Activated CD4-positive, alpha-beta memory T cell treated with anti-CD3 and anti-CD28 coated beads for 36 hours (primary cell): ENCODE measurements at regions of chr6 and their contacts with region 1.

Region 1: DNA sequence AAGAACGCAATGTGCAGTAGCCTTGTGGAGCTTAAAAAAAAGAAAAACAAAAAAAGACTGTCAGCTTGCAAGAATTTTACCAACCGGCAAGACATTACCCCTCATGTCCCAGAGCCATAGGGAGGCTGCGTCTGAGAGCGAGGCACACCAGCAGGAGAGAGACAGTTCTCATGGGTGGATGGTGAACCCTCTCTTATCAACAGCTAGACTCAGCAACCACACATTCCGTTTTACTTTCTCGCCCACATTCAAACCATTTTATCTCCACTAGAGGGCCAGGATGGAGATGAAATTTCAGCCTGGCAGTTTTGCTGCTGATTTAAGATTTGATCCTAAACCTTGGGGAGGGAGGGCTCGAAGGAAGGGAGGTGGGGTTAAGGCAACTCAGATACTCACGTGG is 247.0 kb downstream of the ATXN1 start:
- DNase-seq: peak; percentile 39
- H3K4me3 Mint-ChIP-seq: no peak overlapping the region
- H3K27ac Mint-ChIP-seq: no peak overlapping the region
- H3K4me1 Mint-ChIP-seq: peaks cover 79% of the 10 kb centered on the region
- H3K27me3 Mint-ChIP-seq: no peaks in the 10 kb centered on the region

Region 2: GRCh38 chr6:16425881-16426615 is 88.2 kb before region 1 on chr6:
- CTCF ChIA-PET with region 1: interaction called, 11 read pairs
- POLR2A ChIA-PET with region 1: no interaction called
- intact Hi-C with region 1: no loop called
- DNase-seq: no peak
- H3K4me3 Mint-ChIP-seq: no peak overlapping the region
- H3K27ac Mint-ChIP-seq: peak overlapping the region; percentile 23
- H3K4me1 Mint-ChIP-seq: peaks cover 55% of the 10 kb centered on the region
- H3K27me3 Mint-ChIP-seq: no peaks in the 10 kb centered on the region

Region 3: GRCh38 chr6:16461491-16461890 is 52.8 kb before region 1 on chr6:
- CTCF ChIA-PET with region 1: no interaction called
- POLR2A ChIA-PET with region 1: no interaction called
- intact Hi-C with region 1: no loop called
- DNase-seq: no peak
- H3K4me3 Mint-ChIP-seq: no peak overlapping the region
- H3K27ac Mint-ChIP-seq: no peak overlapping the region
- H3K4me1 Mint-ChIP-seq: peaks cover 26% of the 10 kb centered on the region
- H3K27me3 Mint-ChIP-seq: no peaks in the 10 kb centered on the region

Region 4: DNA sequence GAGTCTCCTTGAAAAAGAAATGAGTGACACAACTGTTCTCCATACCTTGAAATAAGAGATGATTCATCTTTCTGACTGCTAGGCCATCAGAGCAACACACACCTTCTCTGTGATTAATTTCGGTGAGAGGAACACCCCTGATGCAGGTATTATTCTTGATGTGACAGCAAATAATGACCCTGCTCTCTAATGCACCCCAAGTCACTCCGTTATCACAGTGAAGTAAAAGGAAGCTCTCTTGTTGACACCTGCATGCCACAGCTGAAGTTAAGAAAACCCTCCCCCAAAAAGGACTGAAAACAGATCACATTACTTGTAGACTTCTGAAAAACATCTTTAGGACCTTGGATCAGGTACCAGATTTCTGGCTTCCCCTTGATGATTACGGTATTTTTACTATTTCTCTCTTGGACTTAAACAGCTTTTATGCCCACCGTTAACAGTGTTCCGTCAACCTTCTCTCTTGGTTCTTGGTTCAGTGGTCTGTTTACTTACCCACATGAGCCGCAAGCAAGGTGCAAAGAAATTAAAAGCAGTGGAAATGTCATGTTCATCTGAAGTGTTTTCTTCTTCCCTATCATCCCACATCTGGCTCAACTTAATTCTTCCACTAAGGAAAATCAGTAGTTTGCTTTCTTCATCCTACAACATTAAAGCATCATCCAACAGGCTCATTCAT is 26.1 kb before region 1 on chr6:
- CTCF ChIA-PET with region 1: interaction called, 34 read pairs
- POLR2A ChIA-PET with region 1: no interaction called
- intact Hi-C with region 1: loop called (anchors 1 kb)
- DNase-seq: no peak
- H3K4me3 Mint-ChIP-seq: peak overlapping the region; percentile 17
- H3K27ac Mint-ChIP-seq: peak overlapping the region; percentile 87
- H3K4me1 Mint-ChIP-seq: peaks cover 84% of the 10 kb centered on the region
- H3K27me3 Mint-ChIP-seq: no peaks in the 10 kb centered on the region

Region 5: GRCh38 chr6:16591396-16592222 is 77.4 kb after region 1 on chr6:
- CTCF ChIA-PET with region 1: interaction called, 15 read pairs
- POLR2A ChIA-PET with region 1: interaction called, 3 read pairs
- intact Hi-C with region 1: loop called (anchors 1 kb)
- DNase-seq: peak; percentile 72
- H3K4me3 Mint-ChIP-seq: peak overlapping the region; percentile 39
- H3K27ac Mint-ChIP-seq: peak overlapping the region; percentile 78
- H3K4me1 Mint-ChIP-seq: peaks cover 43% of the 10 kb centered on the region
- H3K27me3 Mint-ChIP-seq: no peaks in the 10 kb centered on the region

Region 6: DNA sequence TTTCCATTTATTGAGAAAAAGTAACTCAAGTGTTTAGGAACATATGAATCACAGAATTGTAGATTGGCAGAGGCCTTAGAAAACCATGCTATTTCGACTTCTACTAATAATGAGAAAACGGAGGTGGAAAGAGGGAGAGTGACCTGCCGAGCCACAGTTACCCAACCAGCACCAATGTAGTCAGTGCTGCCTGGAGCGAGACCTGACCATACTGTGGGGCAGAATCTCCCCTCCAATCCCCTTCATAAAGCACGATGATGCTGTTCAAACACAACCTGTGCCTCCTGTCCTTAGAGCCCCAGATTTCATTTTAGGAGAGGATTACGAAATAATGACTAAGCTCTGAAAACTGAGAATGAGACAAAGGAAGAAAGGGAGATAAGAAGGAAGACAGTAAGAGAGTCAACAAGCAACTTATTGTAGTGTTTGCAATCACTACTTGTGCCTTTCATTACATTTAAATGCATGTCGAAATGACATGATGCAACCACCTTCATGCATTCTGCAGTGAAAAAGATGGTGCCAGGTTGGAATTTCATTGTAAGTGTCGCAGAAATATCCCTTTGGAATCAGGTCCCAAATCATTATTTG is 176.5 kb after region 1 on chr6:
- CTCF ChIA-PET with region 1: interaction called, 8 read pairs
- POLR2A ChIA-PET with region 1: interaction called, 3 read pairs
- intact Hi-C with region 1: loop called (anchors 2 kb)
- DNase-seq: peak; percentile 82
- H3K4me3 Mint-ChIP-seq: peak overlapping the region; percentile 51
- H3K27ac Mint-ChIP-seq: peak overlapping the region; percentile 90
- H3K4me1 Mint-ChIP-seq: peaks cover 93% of the 10 kb centered on the region
- H3K27me3 Mint-ChIP-seq: no peaks in the 10 kb centered on the region